ENCODE measurements at regions of chr20 and their contacts with region 1.

Region 1: GRCh38 chr20:45174434-45175364 is at the start of gene PI3:
- DNase-seq: no peak
- ATAC-seq: no peak
- H3K4me3 ChIP-seq: no peak within 1 kb of the TSS
- H3K4me3 Mint-ChIP-seq: no peak within 1 kb of the TSS
- H3K27ac ChIP-seq: no peak within 1 kb of the TSS
- H3K27ac Mint-ChIP-seq: no peak within 1 kb of the TSS
- H3K4me1 ChIP-seq: no peaks in the 10 kb centered on the region
- H3K4me1 Mint-ChIP-seq: peaks cover 0 to 3% (median 0%) of the 10 kb centered on the region in 7 donors
- H3K27me3 ChIP-seq: no peaks in the 10 kb centered on the region
- H3K27me3 Mint-ChIP-seq: peaks cover 7 to 27% (median 21%) of the 10 kb centered on the region in 5 donors
- total RNA-seq, gene PI3: not detected

Region 2: GRCh38 chr20:45157962-45158361 is 16.7 kb before region 1 on chr20:
- CTCF ChIA-PET with region 1: no interaction called
- POLR2A ChIA-PET with region 1: no interaction called
- intact Hi-C with region 1: no loop called
- DNase-seq: no peak
- ATAC-seq: no peak
- H3K4me3 ChIP-seq: no peak overlapping the region
- H3K4me3 Mint-ChIP-seq: no peak overlapping the region
- H3K27ac ChIP-seq: no peak overlapping the region
- H3K27ac Mint-ChIP-seq: no peak overlapping the region
- H3K4me1 ChIP-seq: no peaks in the 10 kb centered on the region
- H3K4me1 Mint-ChIP-seq: peaks cover 0 to 2% (median 0%) of the 10 kb centered on the region in 7 donors
- H3K27me3 ChIP-seq: no peaks in the 10 kb centered on the region
- H3K27me3 Mint-ChIP-seq: peaks cover 24 to 66% (median 50%) of the 10 kb centered on the region in 5 donors

Region 3: DNA sequence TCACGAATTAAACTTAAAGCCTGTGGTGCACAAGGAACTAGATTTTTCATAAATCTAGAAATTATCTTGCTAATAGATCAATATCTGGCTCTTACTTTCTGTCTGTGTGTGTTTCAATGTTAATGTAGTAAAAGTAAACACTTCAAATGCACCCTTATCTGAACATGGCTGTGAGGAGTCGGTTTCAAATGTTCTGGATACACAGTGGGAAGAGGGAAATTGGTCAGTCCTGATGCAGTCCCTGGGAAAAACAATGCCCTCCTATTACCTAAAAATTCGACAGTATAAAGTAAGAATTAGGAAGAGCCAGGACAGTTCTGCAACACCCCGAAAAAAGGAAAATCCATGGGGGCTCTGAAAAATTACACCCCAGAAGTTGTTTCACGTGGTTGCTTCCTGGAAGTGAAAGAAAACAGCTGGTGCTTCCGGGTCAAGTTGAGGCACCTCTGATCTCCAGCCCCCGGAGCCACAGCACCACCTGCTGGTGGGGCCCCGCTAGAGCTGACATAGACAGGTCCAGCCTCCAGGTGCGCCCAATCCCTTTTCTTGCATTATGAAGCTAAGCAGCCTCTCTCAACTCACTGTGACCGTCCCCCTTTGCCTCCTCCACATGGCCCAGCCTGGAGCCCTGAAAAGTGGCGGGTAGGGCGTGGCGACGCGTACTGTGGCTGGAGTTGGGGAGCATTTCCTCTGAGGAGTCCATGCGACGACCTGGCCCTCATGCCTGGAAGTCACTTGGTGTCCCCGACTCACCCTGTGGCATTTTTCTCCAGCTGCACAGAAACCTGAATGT is 54.8 kb after region 1 on chr20:
- CTCF ChIA-PET with region 1: no interaction called
- POLR2A ChIA-PET with region 1: no interaction called
- intact Hi-C with region 1: loop called in 1 of 2 experiments (anchors 10 kb)
- DNase-seq: peak in 5 of 9 donors; percentile 2 to 47 (median 5)
- ATAC-seq: no peak
- H3K4me3 ChIP-seq: no peak overlapping the region
- H3K4me3 Mint-ChIP-seq: no peak overlapping the region
- H3K27ac ChIP-seq: no peak overlapping the region
- H3K27ac Mint-ChIP-seq: no peak overlapping the region
- H3K4me1 ChIP-seq: no peaks in the 10 kb centered on the region
- H3K4me1 Mint-ChIP-seq: peaks cover 0 to 2% (median 0%) of the 10 kb centered on the region in 7 donors
- H3K27me3 ChIP-seq: peaks cover 0 to 7% of the 10 kb centered on the region in 2 donors
- H3K27me3 Mint-ChIP-seq: peaks cover 39 to 60% (median 48%) of the 10 kb centered on the region in 5 donors

Measured in naive thymus-derived CD4-positive, alpha-beta T cell (primary cell).